Motor neuron (in vitro differentiated cells): ENCODE measurements at regions of chr2 and their contacts with region 1.

Region 1: DNA sequence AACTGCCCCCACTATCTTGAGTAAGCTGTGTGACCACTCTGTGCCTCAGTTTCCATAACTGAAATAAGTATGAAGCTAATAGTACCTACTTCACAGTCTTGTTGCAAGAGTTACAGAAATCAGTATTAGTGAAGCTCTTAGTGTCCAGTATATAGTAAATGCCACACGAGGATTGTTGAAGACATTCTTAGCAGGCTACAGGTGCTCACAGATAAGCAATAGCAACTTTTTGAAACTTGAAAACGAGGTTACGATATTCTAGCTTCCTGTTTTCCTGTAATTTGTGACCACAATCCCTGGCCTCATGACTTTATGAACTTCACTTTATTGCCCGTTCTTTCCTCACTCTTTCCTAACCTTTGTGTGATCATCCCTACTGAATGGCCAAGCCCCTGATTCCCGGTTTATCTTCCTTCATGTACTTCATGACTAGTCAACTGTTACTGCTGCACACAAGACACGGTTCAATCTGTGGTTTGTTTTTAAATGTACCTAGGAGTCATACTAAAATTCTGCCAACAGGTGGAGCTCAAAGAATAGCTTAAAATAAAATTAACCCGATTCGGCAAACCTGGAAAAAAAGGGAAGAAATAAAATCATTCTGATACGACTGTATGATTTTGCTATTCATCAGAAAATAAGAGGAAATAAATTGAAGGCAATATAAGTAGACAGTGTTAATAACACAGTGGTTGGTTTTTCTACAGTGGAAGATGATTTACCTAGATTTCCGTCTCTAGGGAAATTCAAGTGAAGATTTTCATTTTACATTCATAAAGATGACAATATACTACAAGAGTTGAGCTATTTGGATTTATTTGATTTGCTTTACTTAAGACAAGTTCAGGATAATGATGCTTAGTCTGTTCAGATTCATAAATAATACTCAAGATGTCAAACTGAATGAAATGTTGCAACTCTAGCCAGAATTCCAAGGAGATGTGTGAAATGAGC is 38.1 kb upstream of the STAT1 start:
- ATAC-seq: peak in 7 of 8 experiments; percentile 21 to 53 (median 31)
- H3K4me3 ChIP-seq: no peak overlapping the region
- H3K27ac ChIP-seq: no peak overlapping the region
- H3K4me1 ChIP-seq: peaks cover 4 to 5% of the 10 kb centered on the region in 2 donors

Region 2: GRCh38 chr2:190578158-190579057 is 473.7 kb before region 1 on chr2:
- in situ Hi-C with region 1: no loop called
- ATAC-seq: peak; percentile 43 to 71 (median 62)
- H3K4me3 ChIP-seq: no peak overlapping the region
- H3K27ac ChIP-seq: no peak overlapping the region
- H3K4me1 ChIP-seq: peaks cover 0 to 4% of the 10 kb centered on the region in 2 donors

Region 3: GRCh38 chr2:191150600-191151330 is 98.7 kb after region 1 on chr2 and contains the start of gene STAT4:
- in situ Hi-C with region 1: loop called in 3 of 9 experiments (anchors 10 to 25 kb)
- ATAC-seq: peak; percentile 69 to 96 (median 94)
- H3K4me3 ChIP-seq: peak within 1 kb of the TSS; percentile 31 to 44 (median 38)
- H3K27ac ChIP-seq: no peak within 1 kb of the TSS
- H3K4me1 ChIP-seq: no peaks in the 10 kb centered on the region
- total RNA-seq, gene STAT4: 1.6 to 5.0 (median 2.7) TPM

Region 4: DNA sequence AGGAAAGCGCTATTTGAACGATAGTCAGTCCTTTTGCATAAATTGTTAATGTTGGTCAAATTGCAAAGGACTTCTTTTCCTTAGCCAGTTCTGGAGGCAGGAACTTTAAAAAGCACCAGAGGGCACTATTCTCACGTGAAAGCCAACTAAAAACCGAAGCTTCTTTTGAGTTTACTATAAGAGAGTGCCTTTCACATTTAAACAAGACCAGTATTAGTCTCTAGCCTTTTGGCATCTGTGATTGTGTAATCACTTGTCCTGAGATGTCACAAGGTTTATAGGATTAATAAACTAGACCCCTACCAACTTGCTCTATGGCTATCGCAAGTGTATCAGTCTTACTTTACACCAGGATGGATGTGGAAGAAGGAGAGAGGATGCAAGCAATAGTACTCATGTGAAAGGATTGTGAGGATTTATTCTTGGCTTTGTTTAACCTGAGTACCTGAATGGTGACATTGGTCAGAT is 113.1 kb after region 1 on chr2:
- in situ Hi-C with region 1: loop called in 2 of 9 experiments (anchors 25 kb)
- ATAC-seq: peak; percentile 66 to 97 (median 74)
- H3K4me3 ChIP-seq: no peak overlapping the region
- H3K27ac ChIP-seq: no peak overlapping the region
- H3K4me1 ChIP-seq: peaks cover 0 to 2% of the 10 kb centered on the region in 2 donors

Region 5: GRCh38 chr2:191369036-191369435 is 316.9 kb after region 1 on chr2:
- in situ Hi-C with region 1: loop called in 1 of 9 experiments (anchors 25 kb)
- ATAC-seq: no peak
- H3K4me3 ChIP-seq: no peak overlapping the region
- H3K27ac ChIP-seq: no peak overlapping the region
- H3K4me1 ChIP-seq: no peaks in the 10 kb centered on the region

Region 6: DNA sequence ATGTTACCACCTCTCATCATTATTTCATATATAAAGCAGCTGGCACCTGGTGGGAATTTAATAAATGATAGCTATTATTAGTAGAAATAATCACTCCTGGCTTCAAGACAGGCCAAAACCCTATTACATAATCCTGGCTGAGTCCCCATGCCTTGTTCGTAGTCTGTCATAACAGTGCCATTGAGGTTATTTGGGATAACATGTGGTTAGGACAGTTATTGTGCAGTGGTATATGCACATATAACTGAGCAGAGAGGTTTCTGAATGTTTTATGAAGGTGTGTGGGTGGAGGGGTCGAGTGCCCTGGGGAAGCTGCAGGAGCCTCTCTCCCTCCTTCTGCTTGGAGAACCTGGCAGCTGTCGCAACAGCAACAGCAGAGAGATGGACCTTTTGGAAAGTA is 463.4 kb after region 1 on chr2:
- in situ Hi-C with region 1: loop called in 3 of 9 experiments (anchors 10 to 25 kb)
- ATAC-seq: peak in 4 of 8 experiments; percentile 9 to 56 (median 14)
- H3K4me3 ChIP-seq: no peak overlapping the region
- H3K27ac ChIP-seq: no peak overlapping the region
- H3K4me1 ChIP-seq: peaks cover 0 to 17% of the 10 kb centered on the region in 2 donors